CD8-positive, alpha-beta T cell (primary cell): ENCODE measurements at regions of chr7 and their contacts with region 1.

Region 1: DNA sequence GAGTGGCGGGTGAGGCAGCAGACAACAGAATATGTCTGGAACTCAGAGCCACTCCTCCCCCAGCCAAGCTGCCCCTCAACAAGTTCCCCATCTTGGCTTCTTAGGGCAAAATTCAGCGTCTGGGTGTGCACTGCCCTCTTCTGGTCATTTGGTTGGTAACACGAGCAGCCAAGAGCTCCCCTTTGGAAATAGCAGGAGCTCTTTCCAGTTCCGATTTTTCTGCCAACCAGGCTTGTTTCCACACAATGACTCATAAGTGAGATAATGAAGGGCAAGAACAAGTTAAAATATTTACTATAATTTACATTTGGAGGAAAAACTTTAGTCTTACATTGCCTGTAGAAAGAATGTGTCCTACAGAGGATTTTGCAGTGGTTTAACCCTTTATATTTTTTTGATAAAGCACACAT is 70.5 kb downstream of the ADCYAP1R1 start:
- DNase-seq: peak in 6 of 9 experiments; percentile 7 to 57 (median 32)
- ATAC-seq: no peak
- H3K4me3 ChIP-seq: no peak overlapping the region
- H3K4me3 Mint-ChIP-seq: no peak overlapping the region
- H3K27ac ChIP-seq: no peak overlapping the region
- H3K27ac Mint-ChIP-seq: no peak overlapping the region
- H3K4me1 ChIP-seq: no peaks in the 10 kb centered on the region
- H3K4me1 Mint-ChIP-seq: no peaks in the 10 kb centered on the region
- H3K27me3 ChIP-seq: no peaks in the 10 kb centered on the region
- H3K27me3 Mint-ChIP-seq: peaks cover 9% of the 10 kb centered on the region
- CTCF ChIP-seq: peak; percentile 49

Region 2: DNA sequence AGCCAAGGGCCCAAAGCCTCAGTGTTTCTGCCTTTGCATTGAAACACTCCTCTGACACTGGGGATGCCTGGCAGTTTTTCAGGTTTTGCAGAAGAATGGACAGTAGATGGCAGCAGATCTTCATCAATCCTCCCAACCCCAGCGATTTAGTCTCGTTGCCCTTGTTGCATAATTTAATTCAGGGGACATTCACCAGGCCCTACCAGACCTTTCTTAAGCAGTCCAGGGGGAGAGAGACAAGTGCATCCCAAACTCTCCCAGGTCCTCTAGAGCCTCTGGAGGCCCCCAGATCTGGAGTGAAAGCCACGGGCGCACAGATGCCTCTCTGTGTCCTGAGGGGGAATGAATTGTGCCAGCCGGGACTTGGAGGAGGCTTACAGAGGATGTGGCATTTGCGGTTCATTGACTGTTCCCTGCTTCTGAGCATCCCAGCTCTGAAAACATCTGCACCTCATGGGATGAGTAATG is 321.8 kb before region 1 on chr7:
- CTCF ChIA-PET with region 1: interaction called, 18 read pairs
- POLR2A ChIA-PET with region 1: no interaction called
- intact Hi-C with region 1: loop called (anchors 1 kb)
- DNase-seq: peak in 5 of 9 experiments; percentile 14 to 61 (median 47)
- ATAC-seq: no peak
- H3K4me3 ChIP-seq: no peak overlapping the region
- H3K4me3 Mint-ChIP-seq: no peak overlapping the region
- H3K27ac ChIP-seq: no peak overlapping the region
- H3K27ac Mint-ChIP-seq: no peak overlapping the region
- H3K4me1 ChIP-seq: peaks cover 13% of the 10 kb centered on the region
- H3K4me1 Mint-ChIP-seq: peaks cover 11% of the 10 kb centered on the region
- H3K27me3 ChIP-seq: no peaks in the 10 kb centered on the region
- H3K27me3 Mint-ChIP-seq: no peaks in the 10 kb centered on the region
- CTCF ChIP-seq: peak; percentile 37

Region 3: GRCh38 chr7:30983042-30983913 is 139.4 kb before region 1 on chr7:
- CTCF ChIA-PET with region 1: interaction called, 49 read pairs
- POLR2A ChIA-PET with region 1: interaction called, 4 read pairs
- intact Hi-C with region 1: loop called (anchors 1 kb)
- DNase-seq: peak; percentile 44 to 81 (median 71)
- ATAC-seq: peak; percentile 57
- H3K4me3 ChIP-seq: no peak overlapping the region
- H3K4me3 Mint-ChIP-seq: no peak overlapping the region
- H3K27ac ChIP-seq: no peak overlapping the region
- H3K27ac Mint-ChIP-seq: no peak overlapping the region
- H3K4me1 ChIP-seq: no peaks in the 10 kb centered on the region
- H3K4me1 Mint-ChIP-seq: peaks cover 5% of the 10 kb centered on the region
- H3K27me3 ChIP-seq: peaks cover 4 to 6% of the 10 kb centered on the region in 2 experiments
- H3K27me3 Mint-ChIP-seq: peaks cover 51% of the 10 kb centered on the region
- CTCF ChIP-seq: peak; percentile 82

Region 4: GRCh38 chr7:31134246-31135188 is 11.9 kb after region 1 on chr7:
- CTCF ChIA-PET with region 1: interaction called, 23 read pairs
- POLR2A ChIA-PET with region 1: no interaction called
- intact Hi-C with region 1: no loop called
- DNase-seq: peak in 7 of 9 experiments; percentile 19 to 57 (median 36)
- ATAC-seq: no peak
- H3K4me3 ChIP-seq: no peak overlapping the region
- H3K4me3 Mint-ChIP-seq: no peak overlapping the region
- H3K27ac ChIP-seq: no peak overlapping the region
- H3K27ac Mint-ChIP-seq: no peak overlapping the region
- H3K4me1 ChIP-seq: no peaks in the 10 kb centered on the region
- H3K4me1 Mint-ChIP-seq: peaks cover 4% of the 10 kb centered on the region
- H3K27me3 ChIP-seq: no peaks in the 10 kb centered on the region
- H3K27me3 Mint-ChIP-seq: peaks cover 2% of the 10 kb centered on the region
- CTCF ChIP-seq: peak; percentile 59